Activated naive CD4-positive, alpha-beta T cell treated with anti-CD3 and anti-CD28 coated beads for 36 hours (primary cell): ENCODE measurements at regions of chr5 and their contacts with region 1.

Region 1: DNA sequence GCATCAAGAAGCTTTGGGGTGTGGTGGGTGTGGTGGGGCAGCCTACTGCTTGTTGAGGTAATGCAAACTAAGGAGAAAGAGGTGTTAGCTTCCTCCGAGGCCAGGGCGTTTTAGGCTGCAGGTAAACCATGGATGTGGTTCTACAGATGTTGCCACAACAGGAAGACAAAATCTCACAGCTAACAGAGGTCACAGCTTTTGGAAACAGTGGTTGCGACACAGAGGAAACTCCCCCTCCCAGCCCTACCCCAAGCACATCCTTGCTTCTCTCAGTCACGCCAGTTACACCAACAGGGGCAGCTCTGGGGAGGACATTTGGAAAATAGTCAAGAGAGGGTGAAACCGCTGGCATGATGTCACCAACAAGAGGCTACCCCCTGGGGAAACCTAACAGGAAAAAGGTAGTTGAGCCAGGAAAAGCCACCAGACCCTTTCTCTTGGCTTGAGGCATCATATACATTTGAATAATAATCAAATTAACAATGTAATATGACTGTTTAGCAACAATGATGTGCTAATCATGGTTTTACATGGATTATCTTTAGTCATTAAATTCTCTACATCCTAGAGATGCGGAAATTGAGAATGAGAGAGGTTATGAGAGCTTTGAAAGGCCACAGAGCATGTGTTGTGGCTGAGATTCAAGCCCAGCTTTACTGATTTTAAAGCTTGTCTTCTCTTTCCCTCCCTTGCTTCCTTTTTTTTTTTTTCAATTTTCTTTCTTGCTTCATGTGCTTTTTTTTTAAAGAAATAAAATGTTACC is 82.2 kb upstream of the IL12B start:
- DNase-seq: peak; percentile 86
- H3K4me3 Mint-ChIP-seq: no peak overlapping the region
- H3K27ac Mint-ChIP-seq: peak overlapping the region; percentile 37
- H3K4me1 Mint-ChIP-seq: peaks cover 54% of the 10 kb centered on the region
- H3K27me3 Mint-ChIP-seq: peaks cover 3% of the 10 kb centered on the region

Region 2: GRCh38 chr5:158819840-158820620 is 592.4 kb before region 1 on chr5:
- CTCF ChIA-PET with region 1: no interaction called
- intact Hi-C with region 1: loop called (anchors 5 kb)
- DNase-seq: peak; percentile 42
- H3K4me3 Mint-ChIP-seq: no peak overlapping the region
- H3K27ac Mint-ChIP-seq: no peak overlapping the region
- H3K4me1 Mint-ChIP-seq: peaks cover 28% of the 10 kb centered on the region
- H3K27me3 Mint-ChIP-seq: peaks cover 2% of the 10 kb centered on the region

Region 3: DNA sequence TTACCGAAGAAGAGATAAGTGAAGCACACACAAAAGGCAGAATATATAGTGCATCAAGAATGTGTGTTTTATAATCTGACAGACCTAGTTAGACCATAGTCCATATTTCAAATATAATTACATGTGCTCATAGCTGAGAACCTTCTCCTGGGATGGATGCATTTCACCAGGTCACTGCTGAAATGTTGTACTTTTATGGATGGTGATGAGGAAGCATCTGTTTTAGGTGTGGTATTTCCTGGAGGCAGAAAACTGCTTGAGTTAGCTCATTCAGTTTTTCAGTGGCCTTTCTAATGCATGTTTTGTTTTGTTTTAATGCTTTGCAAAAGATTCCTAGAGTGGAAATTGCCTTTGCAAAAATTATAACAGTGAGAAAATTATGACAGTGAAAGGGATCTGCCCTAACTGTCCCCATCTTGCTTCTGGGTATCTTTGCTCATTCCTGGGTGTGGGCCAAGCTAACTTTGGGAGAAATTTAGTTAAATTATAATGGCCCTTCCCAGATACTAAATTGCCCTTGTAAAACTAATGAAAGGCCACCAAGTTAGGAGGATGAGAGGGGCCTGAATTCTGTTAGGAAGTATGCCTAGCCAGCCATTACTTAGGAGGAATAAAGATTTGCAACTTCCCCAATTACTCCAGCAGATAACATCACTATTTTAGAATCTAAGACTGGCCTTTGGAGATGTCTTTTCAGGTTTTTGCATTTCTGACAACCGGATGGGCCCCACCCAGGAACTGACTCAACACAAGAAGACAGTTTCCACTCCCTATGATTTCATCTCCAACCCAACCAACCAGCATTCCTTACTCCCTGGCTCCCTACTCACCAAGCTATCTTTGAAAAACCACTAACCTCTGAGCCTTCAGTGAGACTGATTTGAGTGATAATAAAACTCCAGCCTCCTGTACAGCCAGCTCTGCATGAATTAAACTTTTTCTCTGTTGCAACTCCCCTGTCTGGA is 75.2 kb before region 1 on chr5:
- CTCF ChIA-PET with region 1: interaction called, 4 read pairs
- intact Hi-C with region 1: loop called (anchors 1 kb)
- DNase-seq: peak; percentile 64
- H3K4me3 Mint-ChIP-seq: no peak overlapping the region
- H3K27ac Mint-ChIP-seq: no peak overlapping the region
- H3K4me1 Mint-ChIP-seq: peaks cover 39% of the 10 kb centered on the region
- H3K27me3 Mint-ChIP-seq: no peaks in the 10 kb centered on the region

Region 4: GRCh38 chr5:159773062-159773924 is 360.8 kb after region 1 on chr5:
- CTCF ChIA-PET with region 1: no interaction called
- intact Hi-C with region 1: loop called (anchors 5 kb)
- DNase-seq: peak; percentile 86
- H3K4me3 Mint-ChIP-seq: peak overlapping the region; percentile 41
- H3K27ac Mint-ChIP-seq: no peak overlapping the region
- H3K4me1 Mint-ChIP-seq: peaks cover 8% of the 10 kb centered on the region
- H3K27me3 Mint-ChIP-seq: peaks cover 32% of the 10 kb centered on the region